ENCODE measurements at regions of chrX and their contacts with region 1.

Region 1: DNA sequence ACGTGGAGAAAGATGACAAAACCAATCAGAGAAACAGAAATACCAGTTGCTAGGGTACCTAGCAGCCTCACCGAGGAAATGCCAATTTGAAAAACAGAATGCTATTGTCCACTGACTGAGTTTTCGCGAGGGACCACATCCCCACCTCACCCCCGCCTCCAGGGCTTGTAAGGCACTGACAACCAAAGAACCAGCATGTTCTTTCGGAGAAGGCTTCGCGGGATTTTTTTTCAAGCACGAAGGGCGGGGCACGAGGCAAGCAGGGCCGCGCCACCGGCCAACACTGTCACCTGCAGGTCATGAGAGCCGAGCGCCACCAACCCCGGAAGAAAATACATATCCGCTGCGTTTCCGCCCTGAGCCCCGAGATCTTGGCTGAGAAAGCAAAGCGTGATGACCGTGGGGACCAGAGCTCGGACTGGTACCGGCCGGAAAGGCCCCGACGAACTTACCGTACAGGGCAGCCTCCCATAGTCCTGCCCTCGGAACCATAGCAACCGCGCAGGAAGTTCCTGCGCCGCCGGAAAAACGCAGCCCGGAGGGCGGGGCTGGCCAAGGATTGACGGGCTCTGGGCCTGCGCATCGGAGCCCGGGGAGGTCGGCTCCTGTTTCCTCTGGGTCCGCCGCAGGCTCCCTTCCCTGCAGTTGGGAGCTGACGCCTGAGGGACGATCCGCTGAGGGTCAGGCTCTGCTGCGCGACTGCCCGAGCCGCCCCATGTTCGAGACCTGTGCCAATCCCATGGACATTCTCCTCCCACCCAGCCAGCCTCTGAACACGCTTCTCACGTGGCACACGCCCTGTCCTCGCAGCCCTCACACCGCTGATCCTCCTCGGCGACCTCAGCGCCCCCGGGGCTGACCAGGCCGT is 59.2 kb upstream of the PAGE5 start:
- DNase-seq: peak; percentile 95
- H3K4me3 ChIP-seq: peak overlapping the region; percentile 37 to 58 (median 54)
- H3K27ac ChIP-seq: peak overlapping the region; percentile 86 to 93 (median 88)
- H3K4me1 ChIP-seq: peaks cover 0 to 3% (median 0%) of the 10 kb centered on the region in 4 donors
- H3K27me3 ChIP-seq: no peaks in the 10 kb centered on the region
- CTCF ChIP-seq: no peak
- EP300 ChIP-seq: peak in 1 of 4 donors; percentile 37
- POLR2A ChIP-seq: peak; percentile 72 to 74

Region 2: GRCh38 chrX:53683556-53684414 is 1477.1 kb before region 1 on chrX:
- intact Hi-C with region 1: loop called (anchors 10 kb)
- DNase-seq: peak; percentile 98
- H3K4me3 ChIP-seq: peak overlapping the region; percentile 48 to 69 (median 62)
- H3K27ac ChIP-seq: peak overlapping the region; percentile 89 to 92 (median 89)
- H3K4me1 ChIP-seq: peaks cover 0 to 22% (median 9%) of the 10 kb centered on the region in 4 donors
- H3K27me3 ChIP-seq: no peaks in the 10 kb centered on the region
- CTCF ChIP-seq: no peak
- EP300 ChIP-seq: no peak
- POLR2A ChIP-seq: peak; percentile 42 to 50

Region 3: GRCh38 chrX:54564936-54565335 is 596.0 kb before region 1 on chrX:
- intact Hi-C with region 1: no loop called
- DNase-seq: no peak
- H3K4me3 ChIP-seq: no peak overlapping the region
- H3K27ac ChIP-seq: no peak overlapping the region
- H3K4me1 ChIP-seq: no peaks in the 10 kb centered on the region
- H3K27me3 ChIP-seq: no peaks in the 10 kb centered on the region
- CTCF ChIP-seq: no peak
- EP300 ChIP-seq: no peak
- POLR2A ChIP-seq: no peak

Region 4: DNA sequence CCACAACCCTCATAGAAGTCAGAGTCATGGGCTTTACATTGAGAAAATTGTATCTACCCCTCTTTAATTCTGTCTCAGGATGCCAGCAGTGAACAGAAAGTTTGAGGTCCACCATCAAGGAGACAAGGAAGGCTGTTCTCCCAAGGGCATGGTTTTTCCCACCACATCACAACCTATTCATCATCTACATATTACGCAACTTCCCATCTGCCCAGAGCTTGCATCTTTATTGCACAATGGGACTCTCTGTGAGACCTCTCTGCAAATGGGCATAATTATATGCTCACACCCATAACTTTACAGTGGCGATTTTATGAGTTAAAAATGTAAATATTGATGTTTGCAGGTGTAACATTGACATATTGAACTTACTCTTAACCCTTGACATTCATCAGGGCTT is 33.2 kb before region 1 on chrX:
- intact Hi-C with region 1: no loop called
- DNase-seq: no peak
- H3K4me3 ChIP-seq: no peak overlapping the region
- H3K27ac ChIP-seq: no peak overlapping the region
- H3K4me1 ChIP-seq: no peaks in the 10 kb centered on the region
- H3K27me3 ChIP-seq: no peaks in the 10 kb centered on the region
- CTCF ChIP-seq: no peak
- EP300 ChIP-seq: no peak
- POLR2A ChIP-seq: no peak

Measured in sigmoid colon (tissue), 7 donors.